MCF 10A (cell line): ENCODE measurements at regions of chr7 and their contacts with region 1.

Region 1: GRCh38 chr7:104231054-104232046 is 23.5 kb upstream of the ORC5 start:
- DNase-seq: peak; percentile 57
- H3K4me3 Mint-ChIP-seq: no peak overlapping the region
- H3K27ac Mint-ChIP-seq: no peak overlapping the region
- H3K4me1 Mint-ChIP-seq: no peaks in the 10 kb centered on the region
- H3K27me3 Mint-ChIP-seq: peaks cover 61% of the 10 kb centered on the region
- CTCF ChIP-seq: peak; percentile 83

Region 2: GRCh38 chr7:103524042-103524907 is 707.1 kb before region 1 on chr7:
- CTCF ChIA-PET with region 1: interaction called, 10 read pairs
- POLR2A ChIA-PET with region 1: no interaction called
- intact Hi-C with region 1: no loop called
- DNase-seq: peak; percentile 30
- H3K4me3 Mint-ChIP-seq: no peak overlapping the region
- H3K27ac Mint-ChIP-seq: no peak overlapping the region
- H3K4me1 Mint-ChIP-seq: peaks cover 4% of the 10 kb centered on the region
- H3K27me3 Mint-ChIP-seq: peaks cover 47% of the 10 kb centered on the region
- CTCF ChIP-seq: peak; percentile 30

Region 3: GRCh38 chr7:104174798-104175197 is 56.6 kb before region 1 on chr7:
- CTCF ChIA-PET with region 1: no interaction called
- POLR2A ChIA-PET with region 1: no interaction called
- intact Hi-C with region 1: no loop called
- DNase-seq: no peak
- H3K4me3 Mint-ChIP-seq: no peak overlapping the region
- H3K27ac Mint-ChIP-seq: no peak overlapping the region
- H3K4me1 Mint-ChIP-seq: no peaks in the 10 kb centered on the region
- H3K27me3 Mint-ChIP-seq: no peaks in the 10 kb centered on the region
- CTCF ChIP-seq: no peak

Region 4: GRCh38 chr7:104252404-104253134 is 21.2 kb after region 1 on chr7:
- CTCF ChIA-PET with region 1: interaction called, 23 read pairs
- POLR2A ChIA-PET with region 1: no interaction called
- intact Hi-C with region 1: no loop called
- DNase-seq: peak; percentile 21
- H3K4me3 Mint-ChIP-seq: no peak overlapping the region
- H3K27ac Mint-ChIP-seq: no peak overlapping the region
- H3K4me1 Mint-ChIP-seq: no peaks in the 10 kb centered on the region
- H3K27me3 Mint-ChIP-seq: peaks cover 56% of the 10 kb centered on the region
- CTCF ChIP-seq: no peak

Region 5: GRCh38 chr7:104272767-104273384 is 41.5 kb after region 1 on chr7:
- CTCF ChIA-PET with region 1: interaction called, 66 read pairs
- POLR2A ChIA-PET with region 1: interaction called, 5 read pairs
- intact Hi-C with region 1: no loop called
- DNase-seq: peak; percentile 50
- H3K4me3 Mint-ChIP-seq: no peak overlapping the region
- H3K27ac Mint-ChIP-seq: no peak overlapping the region
- H3K4me1 Mint-ChIP-seq: no peaks in the 10 kb centered on the region
- H3K27me3 Mint-ChIP-seq: peaks cover 50% of the 10 kb centered on the region
- CTCF ChIP-seq: peak; percentile 41

Region 6: DNA sequence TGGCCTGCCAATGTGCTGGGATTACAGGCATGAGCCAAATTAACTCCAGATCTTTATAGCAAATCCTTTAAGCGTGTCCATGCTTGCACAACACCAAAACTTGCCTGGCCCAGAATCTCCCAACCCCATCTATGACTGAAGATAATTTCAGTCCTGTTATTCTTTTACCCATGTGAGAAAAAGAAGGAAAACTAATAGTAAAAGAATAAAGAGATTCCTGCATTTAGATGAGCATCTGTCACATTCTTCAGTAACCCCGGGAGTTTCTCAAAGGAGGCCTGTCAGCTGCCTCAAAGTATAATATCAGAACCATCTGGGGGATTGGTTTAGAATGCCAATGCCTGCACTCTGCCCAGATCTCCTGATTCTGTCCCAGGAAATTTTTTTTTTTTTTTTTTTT is 624.5 kb after region 1 on chr7:
- CTCF ChIA-PET with region 1: interaction called, 28 read pairs
- POLR2A ChIA-PET with region 1: interaction called, 5 read pairs
- intact Hi-C with region 1: no loop called
- DNase-seq: no peak
- H3K4me3 Mint-ChIP-seq: no peak overlapping the region
- H3K27ac Mint-ChIP-seq: no peak overlapping the region
- H3K4me1 Mint-ChIP-seq: no peaks in the 10 kb centered on the region
- H3K27me3 Mint-ChIP-seq: peaks cover 45% of the 10 kb centered on the region
- CTCF ChIP-seq: no peak

Region 7: GRCh38 chr7:104883718-104884452 is 652.5 kb after region 1 on chr7:
- CTCF ChIA-PET with region 1: interaction called, 14 read pairs
- POLR2A ChIA-PET with region 1: no interaction called
- intact Hi-C with region 1: no loop called
- DNase-seq: peak; percentile 86
- H3K4me3 Mint-ChIP-seq: no peak overlapping the region
- H3K27ac Mint-ChIP-seq: no peak overlapping the region
- H3K4me1 Mint-ChIP-seq: no peaks in the 10 kb centered on the region
- H3K27me3 Mint-ChIP-seq: peaks cover 2% of the 10 kb centered on the region
- CTCF ChIP-seq: peak; percentile 86

Region 8: GRCh38 chr7:104914421-104914820 is 683.1 kb after region 1 on chr7:
- CTCF ChIA-PET with region 1: interaction called, 67 read pairs
- POLR2A ChIA-PET with region 1: interaction called, 4 read pairs
- intact Hi-C with region 1: loop called (anchors 5 kb)
- DNase-seq: no peak
- H3K4me3 Mint-ChIP-seq: no peak overlapping the region
- H3K27ac Mint-ChIP-seq: no peak overlapping the region
- H3K4me1 Mint-ChIP-seq: no peaks in the 10 kb centered on the region
- H3K27me3 Mint-ChIP-seq: peaks cover 69% of the 10 kb centered on the region
- CTCF ChIP-seq: no peak